ENCODE measurements at regions of chr2 and their contacts with region 1.

Region 1: DNA sequence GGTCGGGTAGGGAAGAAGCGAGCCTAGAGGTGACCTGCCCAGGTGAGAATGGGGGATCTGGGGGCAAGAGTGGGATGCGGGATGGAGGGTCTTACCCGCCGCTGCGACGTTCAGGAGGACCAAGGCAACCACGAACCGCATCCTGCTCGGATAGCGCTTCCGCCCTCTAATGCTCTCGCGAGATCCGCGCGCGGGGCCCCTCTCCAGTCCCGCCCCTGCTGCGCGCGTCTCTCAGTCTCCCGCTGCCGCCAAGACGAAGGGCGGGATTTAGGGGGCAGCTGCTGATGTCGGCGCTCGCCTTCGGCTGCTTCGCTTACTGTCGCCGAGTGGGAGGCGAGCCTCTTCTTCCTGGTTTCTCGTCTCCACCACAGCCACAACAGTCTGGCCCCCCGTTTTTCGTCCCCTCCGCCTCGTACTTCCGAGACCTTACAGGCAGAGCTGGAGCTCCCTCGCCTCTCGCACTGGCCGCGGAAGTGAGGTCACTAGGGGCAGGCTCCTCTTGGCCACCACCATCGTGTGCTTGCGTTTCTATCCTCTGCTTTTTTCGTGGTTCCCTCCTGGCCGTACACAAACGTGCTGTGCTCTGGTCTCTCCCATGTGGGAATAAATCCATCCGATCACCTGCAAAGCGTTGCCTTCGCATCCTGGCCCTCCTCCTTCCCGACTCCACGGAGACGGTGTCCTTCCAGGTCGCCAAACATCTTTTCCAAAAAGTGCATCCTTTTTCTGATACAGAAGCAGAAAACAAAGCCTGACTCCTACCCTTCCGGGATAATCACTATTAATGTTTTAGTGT is at the start of gene TGOLN2:
- DNase-seq: peak; percentile 89
- ATAC-seq: peak; percentile 84
- H3K4me3 ChIP-seq: peak within 1 kb of the TSS; percentile 80 to 90 (median 89)
- H3K27ac ChIP-seq: peak within 1 kb of the TSS; percentile 95
- H3K4me1 ChIP-seq: peaks cover 42% of the 10 kb centered on the region
- H3K27me3 ChIP-seq: no peaks in the 10 kb centered on the region; a peak in 1 of 5 replicates
- CTCF ChIP-seq: peak; percentile 47
- EP300 ChIP-seq: peak; percentile 35 to 43; a peak in 3 of 4 replicates
- POLR2A ChIP-seq: peak; percentile 99
- RAD21 ChIP-seq: peak; percentile 72
- total RNA-seq, gene TGOLN2: 62.5 and 99.6 TPM in 2 replicates

Region 2: GRCh38 chr2:85308896-85309555 is 19.0 kb before region 1 on chr2:
- CTCF ChIA-PET with region 1: no interaction called
- POLR2A ChIA-PET with region 1: interaction called, 33 read pairs
- in situ Hi-C with region 1: no loop called
- intact Hi-C with region 1: loop called (anchors 2 kb)
- DNase-seq: peak; percentile 46
- ATAC-seq: peak; percentile 59
- H3K4me3 ChIP-seq: peak overlapping the region; percentile 30 to 70 (median 37); a peak in 5 of 6 replicates
- H3K27ac ChIP-seq: peak overlapping the region; percentile 8
- H3K4me1 ChIP-seq: peaks cover 82% of the 10 kb centered on the region
- H3K27me3 ChIP-seq: no peaks in the 10 kb centered on the region
- CTCF ChIP-seq: 0 out of 2 replicates have a peak, but pooled peaks have one; percentile 2
- EP300 ChIP-seq: no peak
- POLR2A ChIP-seq: 0 out of 4 replicates have a peak, but pooled peaks of 1 of the 2 experiments have one; percentile 17
- RAD21 ChIP-seq: 0 out of 2 replicates have a peak, but pooled peaks have one; percentile 21

Region 3: GRCh38 chr2:85354286-85355072 is 26.5 kb after region 1 on chr2 and contains the starts of genes ELMOD3 and RETSAT:
- CTCF ChIA-PET with region 1: no interaction called
- POLR2A ChIA-PET with region 1: interaction called, 142 read pairs
- in situ Hi-C with region 1: no loop called
- intact Hi-C with region 1: loop called (anchors 1 kb)
- DNase-seq: peak; percentile 100
- ATAC-seq: peak; percentile 98
- H3K4me3 ChIP-seq: peak within 1 kb of the TSS; percentile 89 to 93 (median 91)
- H3K27ac ChIP-seq: peak within 1 kb of the TSS; percentile 72
- H3K4me1 ChIP-seq: peaks cover 33% of the 10 kb centered on the region
- H3K27me3 ChIP-seq: no peaks in the 10 kb centered on the region; a peak in 1 of 5 replicates
- CTCF ChIP-seq: peak; percentile 13; the same call in 1 of the 2 replicates
- EP300 ChIP-seq: peak in 1 of 2 experiments; percentile 61; a peak in 1 of 4 replicates
- POLR2A ChIP-seq: peak; percentile 100
- RAD21 ChIP-seq: peak; percentile 67
- total RNA-seq, gene ELMOD3: 10.3 and 13.3 TPM in 2 replicates
- total RNA-seq, gene RETSAT: 17.2 and 46.7 TPM in 2 replicates

Region 4: GRCh38 chr2:85369500-85369899 is 41.5 kb after region 1 on chr2:
- CTCF ChIA-PET with region 1: no interaction called
- POLR2A ChIA-PET with region 1: interaction called, 32 read pairs
- in situ Hi-C with region 1: no loop called
- intact Hi-C with region 1: no loop called
- DNase-seq: no peak
- ATAC-seq: no peak
- H3K4me3 ChIP-seq: no peak overlapping the region
- H3K27ac ChIP-seq: no peak overlapping the region
- H3K4me1 ChIP-seq: peaks cover 48% of the 10 kb centered on the region
- H3K27me3 ChIP-seq: no peaks in the 10 kb centered on the region
- CTCF ChIP-seq: no peak
- EP300 ChIP-seq: no peak
- POLR2A ChIP-seq: no peak
- RAD21 ChIP-seq: no peak

Region 5: DNA sequence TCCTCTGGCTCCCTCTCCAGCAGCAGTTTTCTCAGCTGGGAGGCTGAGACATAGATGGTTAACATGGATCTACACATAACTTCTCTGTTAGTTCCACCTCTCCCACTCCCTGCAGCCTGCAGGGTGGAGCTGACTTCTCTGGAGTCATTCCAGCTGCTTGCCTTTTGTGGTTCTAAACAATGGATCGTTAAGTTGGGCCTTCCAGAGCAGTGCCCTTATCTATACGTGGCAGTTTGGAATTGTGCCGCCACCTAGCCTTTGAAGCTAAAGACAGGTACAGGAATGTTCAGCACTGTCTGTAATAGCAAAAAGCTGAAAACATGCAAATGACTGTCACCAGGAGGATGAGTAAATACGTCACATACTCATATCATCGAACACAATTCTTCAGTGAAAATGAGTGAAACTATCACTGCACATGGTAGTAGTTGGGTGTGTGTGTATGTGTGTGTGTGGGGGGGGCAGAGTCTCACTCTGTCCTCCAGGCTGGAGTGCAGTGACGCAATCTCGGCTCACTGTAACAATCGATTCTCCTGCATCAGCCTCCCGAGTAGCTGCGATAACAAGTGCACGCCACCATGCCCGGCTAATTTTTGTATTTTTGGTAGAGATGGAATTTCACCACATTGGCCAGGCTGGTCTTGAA is 140.8 kb after region 1 on chr2:
- CTCF ChIA-PET with region 1: no interaction called
- POLR2A ChIA-PET with region 1: interaction called, 6 read pairs
- in situ Hi-C with region 1: no loop called
- intact Hi-C with region 1: loop called (anchors 5 kb)
- DNase-seq: peak; percentile 97
- ATAC-seq: peak; percentile 80
- H3K4me3 ChIP-seq: peak overlapping the region in 2 of 3 experiments; percentile 29 to 44; a peak in 4 of 6 replicates
- H3K27ac ChIP-seq: peak overlapping the region; percentile 70
- H3K4me1 ChIP-seq: peaks cover 67% of the 10 kb centered on the region
- H3K27me3 ChIP-seq: no peaks in the 10 kb centered on the region
- CTCF ChIP-seq: peak; percentile 53
- EP300 ChIP-seq: 0 out of 4 replicates have a peak, but pooled peaks of 1 of the 2 experiments have one; percentile 43
- POLR2A ChIP-seq: no peak
- RAD21 ChIP-seq: peak; percentile 24; the same call in 1 of the 2 replicates

Region 6: GRCh38 chr2:85551698-85552678 is 224.0 kb after region 1 on chr2:
- CTCF ChIA-PET with region 1: no interaction called
- POLR2A ChIA-PET with region 1: interaction called, 5 read pairs
- in situ Hi-C with region 1: no loop called
- intact Hi-C with region 1: loop called (anchors 5 kb)
- DNase-seq: peak; percentile 83
- ATAC-seq: peak; percentile 57
- H3K4me3 ChIP-seq: no peak overlapping the region
- H3K27ac ChIP-seq: no peak overlapping the region
- H3K4me1 ChIP-seq: peaks cover 4% of the 10 kb centered on the region
- H3K27me3 ChIP-seq: no peaks in the 10 kb centered on the region
- CTCF ChIP-seq: peak; percentile 96
- EP300 ChIP-seq: no peak
- POLR2A ChIP-seq: no peak; a peak in 1 of 4 replicates
- RAD21 ChIP-seq: peak; percentile 97

Region 7: DNA sequence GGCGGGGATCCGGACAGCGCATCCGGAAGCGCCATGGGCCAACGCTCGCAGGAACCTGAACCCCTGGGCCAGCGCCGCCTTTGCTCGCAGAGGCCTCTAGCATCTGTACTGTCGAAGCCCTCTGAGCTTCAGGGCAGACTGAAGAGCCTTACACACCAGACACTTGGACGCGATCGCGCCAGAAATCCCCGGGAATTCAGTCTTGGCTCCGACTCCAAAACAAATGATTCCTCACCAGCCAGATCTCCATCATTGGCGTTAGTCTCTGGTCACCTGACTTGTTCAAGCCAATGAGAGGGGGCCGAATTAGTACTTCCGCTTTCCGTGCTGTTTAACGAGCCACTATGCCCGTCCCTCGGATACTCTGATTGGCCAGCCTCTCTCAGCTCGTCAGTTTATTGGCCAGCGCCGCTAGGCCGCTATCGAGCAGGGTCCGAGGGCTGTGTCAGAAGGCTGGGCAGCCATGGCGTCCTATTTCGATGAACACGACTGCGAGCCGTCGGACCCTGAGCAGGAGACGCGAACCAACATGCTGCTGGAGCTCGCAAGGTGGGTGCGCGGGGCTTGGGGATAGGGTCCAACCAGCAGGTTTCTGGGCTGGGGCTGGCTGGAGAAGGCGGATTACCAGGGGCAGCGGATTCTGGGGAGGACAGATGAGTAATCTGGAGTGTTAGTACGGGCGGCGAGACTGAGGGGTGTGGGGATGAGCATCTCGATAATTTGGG is 267.4 kb after region 1 on chr2 and contains the start of gene RNF181:
- CTCF ChIA-PET with region 1: no interaction called
- POLR2A ChIA-PET with region 1: interaction called, 13 read pairs
- in situ Hi-C with region 1: no loop called
- intact Hi-C with region 1: no loop called
- DNase-seq: peak; percentile 99
- ATAC-seq: peak; percentile 92
- H3K4me3 ChIP-seq: peak within 1 kb of the TSS; percentile 88 to 97 (median 90)
- H3K27ac ChIP-seq: peak within 1 kb of the TSS; percentile 80
- H3K4me1 ChIP-seq: peaks cover 86% of the 10 kb centered on the region
- H3K27me3 ChIP-seq: no peaks in the 10 kb centered on the region; a peak in 1 of 5 replicates
- CTCF ChIP-seq: no peak
- EP300 ChIP-seq: no peak
- POLR2A ChIP-seq: peak in 1 of 2 experiments; percentile 77; a peak in 1 of 4 replicates
- RAD21 ChIP-seq: no peak; the same call in 1 of the 2 replicates
- total RNA-seq, gene RNF181: 224 and 234 TPM in 2 replicates

Measured in HepG2 (cell line).